ENCODE measurements at regions of chr16 and their contacts with region 1.

Region 1: DNA sequence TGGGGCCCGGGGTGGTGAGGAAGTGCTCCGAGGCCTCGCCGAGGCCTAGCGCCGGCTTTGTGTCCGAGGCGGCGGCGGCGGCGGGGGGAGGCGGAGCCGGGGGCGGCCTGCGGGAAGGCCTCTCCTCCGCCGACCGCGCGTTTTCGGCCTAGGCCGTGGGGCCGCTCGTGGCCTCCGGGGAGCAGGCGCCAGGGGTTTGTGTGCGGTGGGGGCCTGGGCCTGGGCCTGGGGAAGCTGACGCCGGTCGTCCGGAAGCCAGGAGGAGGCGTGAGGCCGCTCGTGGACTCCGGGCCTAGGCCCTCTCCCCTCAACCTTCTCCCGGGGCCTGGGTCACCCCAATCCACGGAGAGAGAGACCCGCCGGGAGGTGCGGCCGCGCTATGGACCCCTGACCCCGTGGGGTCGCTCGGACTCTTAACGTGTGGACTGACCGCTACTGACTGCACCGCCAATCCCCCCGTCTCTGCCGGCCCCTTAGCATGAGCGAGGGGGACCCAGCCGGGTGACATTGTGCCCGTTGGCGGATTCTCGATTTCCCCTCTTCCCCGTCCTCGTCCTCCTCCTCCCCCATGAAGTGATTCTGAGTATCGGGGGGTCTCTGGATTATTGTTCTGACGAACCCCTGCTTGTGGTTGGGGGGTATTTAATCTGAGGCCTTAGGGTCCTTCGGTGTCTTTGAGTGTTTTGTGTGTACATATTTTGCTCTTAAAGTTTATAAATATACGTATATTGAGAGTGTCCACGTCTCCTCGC is 660 bp downstream of the RBBP6 start:
- DNase-seq: peak; percentile 55
- H3K4me3 ChIP-seq: peak overlapping the region; percentile 74
- H3K27ac ChIP-seq: peak overlapping the region; percentile 99
- H3K4me1 ChIP-seq: peaks cover 4% of the 10 kb centered on the region
- H3K27me3 ChIP-seq: no peaks in the 10 kb centered on the region
- CTCF ChIP-seq: no peak

Region 2: DNA sequence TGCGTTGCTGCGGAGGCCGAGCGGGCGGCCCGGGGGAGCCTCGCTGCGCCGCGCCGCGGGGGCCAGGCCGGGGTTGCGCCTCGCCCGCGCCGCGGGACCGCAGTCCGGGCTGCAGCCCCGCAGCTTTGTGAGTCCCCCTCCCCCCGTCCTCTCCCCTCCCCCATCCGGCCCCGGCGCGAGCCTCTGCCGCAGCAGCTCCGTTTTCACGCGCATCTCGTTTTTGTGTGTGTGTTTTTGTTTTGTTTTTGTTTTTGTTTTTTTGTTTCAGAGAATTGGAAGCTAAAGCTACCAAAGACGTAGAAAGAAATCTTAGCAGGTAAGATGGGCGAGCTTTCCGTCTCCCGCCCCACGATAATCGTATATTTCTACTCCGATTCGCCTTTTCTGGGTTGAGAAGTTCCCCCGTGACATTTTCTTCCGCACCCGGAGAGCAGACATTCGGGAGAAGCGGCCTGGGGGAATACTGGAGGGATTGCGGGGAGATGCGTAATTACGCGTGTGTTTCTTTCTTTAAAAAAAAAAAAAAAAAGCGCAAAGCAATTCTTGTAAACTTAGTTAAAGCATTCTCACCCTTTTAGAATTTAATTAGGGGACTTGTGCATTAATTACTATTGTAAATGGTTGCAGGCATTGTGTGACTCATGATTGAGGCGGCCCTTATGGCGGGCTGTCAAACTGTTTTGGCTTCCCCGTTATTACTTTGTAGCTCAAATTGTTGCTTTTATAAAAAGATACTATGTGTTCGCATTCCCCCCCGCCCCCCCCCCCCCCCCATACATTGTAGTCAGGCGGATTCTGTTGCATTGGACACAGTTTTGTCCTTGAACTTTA is 190.2 kb after region 1 on chr16:
- intact Hi-C with region 1: loop called (anchors 10 kb)
- DNase-seq: peak; percentile 60
- H3K4me3 ChIP-seq: peak overlapping the region; percentile 83
- H3K27ac ChIP-seq: peak overlapping the region; percentile 90
- H3K4me1 ChIP-seq: no peaks in the 10 kb centered on the region
- H3K27me3 ChIP-seq: no peaks in the 10 kb centered on the region
- CTCF ChIP-seq: no peak